Activated CD8-positive, alpha-beta T cell treated with anti-CD3 and anti-CD28 coated beads, Interleukin-2, amount 10 ng/mL, durations not matched to agents 7 days and 5 days (primary cell): ENCODE measurements at regions of chr2 and their contacts with region 1.

Region 1: DNA sequence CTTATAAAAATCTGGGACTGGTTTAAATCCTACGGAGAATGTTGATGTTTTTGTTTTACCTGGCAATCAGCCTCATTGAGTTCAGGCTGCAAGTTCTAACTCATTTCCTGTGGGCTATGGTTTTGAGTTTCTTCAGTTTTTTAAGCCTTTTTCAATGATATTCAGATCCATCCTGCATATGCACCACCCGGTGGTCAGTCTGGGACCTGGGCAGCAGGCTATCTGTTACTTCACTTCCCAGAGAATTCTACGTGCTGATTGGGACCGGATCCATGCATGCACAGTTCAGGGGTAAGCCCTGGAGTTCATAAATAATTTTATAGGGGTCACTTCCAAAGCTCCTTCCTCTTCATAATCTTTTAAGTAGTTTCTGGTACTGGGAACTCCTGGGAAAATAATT is 339.2 kb upstream of the HNRNPA3 start:
- DNase-seq: no peak
- ATAC-seq: no peak
- H3K4me3 Mint-ChIP-seq: no peak overlapping the region
- H3K27ac Mint-ChIP-seq: peak overlapping the region; percentile 4
- H3K4me1 Mint-ChIP-seq: peaks cover 27% of the 10 kb centered on the region
- H3K27me3 Mint-ChIP-seq: no peaks in the 10 kb centered on the region

Region 2: DNA sequence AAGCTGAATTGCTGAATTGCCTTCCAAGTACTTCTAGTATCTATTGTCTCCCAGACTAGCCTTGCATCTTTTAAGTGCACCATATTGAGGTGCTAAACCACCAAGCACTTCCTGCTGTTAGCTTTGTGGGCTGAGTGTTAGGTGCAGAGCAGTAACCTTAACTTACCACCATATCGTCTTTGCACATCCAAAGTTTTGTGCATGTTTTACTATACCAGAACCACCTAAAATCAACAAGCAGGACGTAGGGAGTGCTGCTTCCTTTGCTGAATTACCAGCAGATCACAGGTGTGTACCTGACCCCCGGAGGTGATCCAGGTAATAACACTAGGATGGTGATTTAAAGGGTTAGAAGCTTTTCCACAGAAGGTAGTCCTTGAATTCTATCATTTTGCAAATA is 20.7 kb before region 1 on chr2:
- CTCF ChIA-PET with region 1: interaction called, 57 read pairs
- POLR2A ChIA-PET with region 1: no interaction called
- DNase-seq: peak; percentile 81
- ATAC-seq: peak; percentile 98
- H3K4me3 Mint-ChIP-seq: peak overlapping the region; percentile 6
- H3K27ac Mint-ChIP-seq: peak overlapping the region; percentile 81
- H3K4me1 Mint-ChIP-seq: peaks cover 65% of the 10 kb centered on the region
- H3K27me3 Mint-ChIP-seq: no peaks in the 10 kb centered on the region